PC-9 (cell line): ENCODE measurements at regions of chr1 and their contacts with region 1.

Region 1: GRCh38 chr1:62823556-62823955 is 39.6 kb downstream of the ATG4C start:
- DNase-seq: no peak
- H3K4me3 ChIP-seq: no peak overlapping the region
- H3K27ac ChIP-seq: no peak overlapping the region
- H3K4me1 ChIP-seq: no peaks in the 10 kb centered on the region
- H3K27me3 ChIP-seq: no peaks in the 10 kb centered on the region
- CTCF ChIP-seq: no peak

Region 2: GRCh38 chr1:62516600-62516999 is 307.0 kb before region 1 on chr1:
- CTCF ChIA-PET with region 1: no interaction called
- POLR2A ChIA-PET with region 1: interaction called, 10 read pairs
- intact Hi-C with region 1: no loop called
- DNase-seq: no peak
- H3K4me3 ChIP-seq: no peak overlapping the region
- H3K27ac ChIP-seq: no peak overlapping the region
- H3K4me1 ChIP-seq: no peaks in the 10 kb centered on the region
- H3K27me3 ChIP-seq: no peaks in the 10 kb centered on the region
- CTCF ChIP-seq: no peak